WTC11 (cell line): ENCODE measurements at regions of chr5 and their contacts with region 1.

Region 1: GRCh38 chr5:172059661-172060100 is 53.2 kb upstream of the FBXW11 start:
- DNase-seq: no peak
- ATAC-seq: peak; percentile 68
- H3K4me3 Mint-ChIP-seq: no peak overlapping the region
- H3K27ac Mint-ChIP-seq: no peak overlapping the region
- H3K4me1 Mint-ChIP-seq: 0 out of 2 replicates have a peak, but pooled peaks cover 2% of the 10 kb centered on the region
- H3K27me3 Mint-ChIP-seq: no peaks in the 10 kb centered on the region
- CTCF ChIP-seq: peak; percentile 66

Region 2: DNA sequence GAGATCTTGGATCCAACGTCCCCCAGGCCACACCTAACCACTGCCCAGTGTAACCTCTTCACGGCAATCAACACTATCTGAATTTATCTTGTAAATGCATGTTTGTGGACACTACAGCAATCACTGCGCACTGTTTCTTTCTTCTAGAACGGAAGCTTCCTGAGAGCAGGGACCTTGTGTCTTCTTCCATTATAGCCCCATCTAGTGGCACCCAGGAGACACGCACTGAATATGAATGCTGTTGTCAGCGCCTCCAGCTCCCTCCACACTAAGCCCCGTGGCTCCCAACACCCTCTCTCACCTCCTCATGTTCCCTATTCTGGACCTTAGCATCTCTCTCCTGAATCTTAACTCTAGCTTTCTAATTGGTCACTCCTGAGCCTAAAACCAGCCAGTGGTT is 201.4 kb before region 1 on chr5:
- CTCF ChIA-PET with region 1: interaction called, 14 read pairs
- POLR2A ChIA-PET with region 1: no interaction called
- DNase-seq: peak; percentile 37
- ATAC-seq: peak; percentile 85
- H3K4me3 Mint-ChIP-seq: no peak overlapping the region
- H3K27ac Mint-ChIP-seq: peak overlapping the region; percentile 73
- H3K4me1 Mint-ChIP-seq: peaks cover 16% of the 10 kb centered on the region
- H3K27me3 Mint-ChIP-seq: no peaks in the 10 kb centered on the region
- CTCF ChIP-seq: peak; percentile 57

Region 3: DNA sequence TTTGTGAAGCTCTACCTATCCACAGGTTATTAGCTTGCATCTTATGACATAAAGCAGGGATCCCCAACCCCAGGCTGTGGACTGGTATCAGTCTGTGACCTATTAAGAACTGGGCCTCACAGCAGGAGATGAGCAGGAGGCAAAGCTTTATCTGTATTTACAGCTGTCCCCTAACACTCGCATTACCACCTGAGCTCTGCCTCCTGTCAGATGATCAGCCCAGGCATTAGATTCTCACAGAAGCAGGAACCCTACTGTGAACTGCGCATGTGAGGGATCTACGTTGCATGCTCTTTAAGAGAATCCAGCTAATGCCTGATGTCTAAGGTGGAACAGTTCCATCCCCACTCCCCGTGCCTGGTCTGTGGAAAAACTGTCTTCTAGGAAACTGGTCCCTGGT is 72.9 kb before region 1 on chr5:
- CTCF ChIA-PET with region 1: interaction called, 10 read pairs
- POLR2A ChIA-PET with region 1: no interaction called
- DNase-seq: no peak
- ATAC-seq: peak; percentile 50
- H3K4me3 Mint-ChIP-seq: no peak overlapping the region
- H3K27ac Mint-ChIP-seq: peak overlapping the region; percentile 80
- H3K4me1 Mint-ChIP-seq: peaks cover 60% of the 10 kb centered on the region
- H3K27me3 Mint-ChIP-seq: no peaks in the 10 kb centered on the region
- CTCF ChIP-seq: no peak

Region 4: DNA sequence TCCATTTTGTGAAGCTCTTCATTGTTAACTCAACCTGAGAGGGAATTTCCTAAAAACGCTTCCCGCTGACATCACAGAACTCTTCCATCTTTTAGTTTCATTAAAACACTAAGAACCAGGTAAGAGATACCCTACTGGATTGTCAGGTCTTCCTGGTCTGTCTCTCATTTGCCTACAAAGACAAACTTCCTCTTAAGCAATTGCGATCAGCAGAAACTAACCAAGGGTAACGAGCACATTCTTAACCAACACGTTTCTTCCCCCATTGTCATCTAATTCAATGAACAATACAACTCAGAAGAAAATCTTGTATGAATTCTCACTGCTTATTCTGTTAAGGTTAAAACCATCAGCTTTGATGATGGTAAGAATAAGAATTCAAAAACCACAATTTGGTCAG is 59.8 kb before region 1 on chr5:
- CTCF ChIA-PET with region 1: no interaction called
- POLR2A ChIA-PET with region 1: no interaction called
- DNase-seq: no peak
- ATAC-seq: no peak
- H3K4me3 Mint-ChIP-seq: peak overlapping the region; percentile 18
- H3K27ac Mint-ChIP-seq: peak overlapping the region; percentile 73
- H3K4me1 Mint-ChIP-seq: peaks cover 82% of the 10 kb centered on the region
- H3K27me3 Mint-ChIP-seq: no peaks in the 10 kb centered on the region
- CTCF ChIP-seq: no peak

Region 5: GRCh38 chr5:172035039-172035438 is 24.6 kb before region 1 on chr5:
- CTCF ChIA-PET with region 1: interaction called, 12 read pairs
- POLR2A ChIA-PET with region 1: no interaction called
- DNase-seq: no peak
- ATAC-seq: no peak
- H3K4me3 Mint-ChIP-seq: no peak overlapping the region
- H3K27ac Mint-ChIP-seq: no peak overlapping the region
- H3K4me1 Mint-ChIP-seq: no peaks in the 10 kb centered on the region; the same call in 1 of the 2 replicates
- H3K27me3 Mint-ChIP-seq: peaks cover 7% of the 10 kb centered on the region
- CTCF ChIP-seq: no peak

Region 6: DNA sequence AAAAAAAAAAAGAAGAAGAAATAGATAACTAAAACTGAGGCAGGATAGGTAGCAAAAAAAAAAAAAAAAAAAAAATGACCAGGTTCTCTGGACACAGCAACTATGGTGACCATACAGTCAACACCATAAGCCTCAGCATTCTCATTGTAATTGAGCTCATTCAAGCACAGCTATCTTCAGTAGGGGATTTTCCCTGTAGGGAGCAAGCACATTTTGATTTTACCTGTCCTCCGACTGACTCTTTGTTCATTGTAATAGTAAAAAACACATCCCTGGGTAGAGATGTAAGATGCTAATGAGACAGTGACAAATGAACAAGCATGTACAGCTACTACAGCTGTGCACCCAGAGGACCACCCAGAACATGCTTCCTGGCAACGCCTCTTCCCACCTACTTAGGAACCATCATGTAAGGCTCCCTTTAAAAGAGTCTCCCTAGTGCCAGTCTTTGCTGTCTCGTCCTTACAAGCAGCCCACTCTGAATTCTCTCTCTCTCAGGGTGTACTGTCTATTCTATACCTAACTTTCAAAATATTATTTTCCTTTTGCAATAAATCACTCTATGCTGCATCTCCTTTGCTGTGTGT is 11.7 kb after region 1 on chr5:
- CTCF ChIA-PET with region 1: interaction called, 38 read pairs
- POLR2A ChIA-PET with region 1: no interaction called
- DNase-seq: no peak
- ATAC-seq: peak; percentile 78
- H3K4me3 Mint-ChIP-seq: no peak overlapping the region
- H3K27ac Mint-ChIP-seq: 0 out of 2 replicates have a peak overlapping the region, but pooled peaks have one; percentile 26
- H3K4me1 Mint-ChIP-seq: peaks cover 6% of the 10 kb centered on the region
- H3K27me3 Mint-ChIP-seq: no peaks in the 10 kb centered on the region
- CTCF ChIP-seq: no peak

Region 7: DNA sequence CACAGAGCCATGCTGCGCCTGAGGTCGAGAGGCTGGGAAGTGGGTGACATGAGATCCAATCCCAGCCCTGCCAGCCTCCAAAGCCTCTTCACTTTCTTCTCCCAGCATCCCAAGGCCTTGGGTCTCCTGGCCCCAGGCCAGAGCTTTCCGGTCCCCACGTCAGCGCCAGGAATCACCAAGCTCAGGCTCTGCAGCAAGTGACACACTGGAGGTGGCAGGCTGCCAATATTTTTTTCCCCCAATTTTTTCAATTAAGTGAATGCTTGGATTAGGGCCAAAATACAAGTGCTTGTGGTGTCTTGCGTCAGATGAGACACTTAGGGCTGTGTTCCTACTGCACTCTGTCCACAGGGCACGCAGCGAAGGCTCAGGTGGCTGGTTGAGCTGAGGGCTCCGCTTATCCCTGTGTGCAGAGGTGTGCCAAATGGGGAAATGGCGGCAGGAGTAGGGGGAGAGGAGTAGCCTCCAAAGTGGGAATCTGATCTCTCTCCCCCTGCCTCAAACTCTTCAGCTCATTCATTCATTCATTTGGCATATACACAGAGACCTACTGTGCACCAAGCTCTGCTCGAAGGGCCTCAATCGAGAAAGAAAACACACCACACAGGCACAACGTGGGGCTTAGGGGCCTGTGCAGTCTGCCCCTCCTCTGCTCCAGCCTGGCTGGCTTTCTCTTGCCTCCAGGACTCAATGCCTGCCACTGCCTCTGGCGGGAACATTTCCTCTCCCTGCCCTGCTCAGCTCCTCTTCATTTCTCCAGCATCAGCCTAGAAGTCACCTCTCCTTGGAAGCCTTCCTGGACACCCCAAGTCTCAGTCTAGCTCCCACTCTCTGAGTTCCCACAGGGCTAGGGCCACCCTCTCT is 378.0 kb after region 1 on chr5:
- CTCF ChIA-PET with region 1: no interaction called
- POLR2A ChIA-PET with region 1: no interaction called
- DNase-seq: no peak
- ATAC-seq: no peak
- H3K4me3 Mint-ChIP-seq: no peak overlapping the region
- H3K27ac Mint-ChIP-seq: no peak overlapping the region; the same call in 1 of the 2 replicates
- H3K4me1 Mint-ChIP-seq: no peaks in the 10 kb centered on the region
- H3K27me3 Mint-ChIP-seq: no peaks in the 10 kb centered on the region
- CTCF ChIP-seq: no peak

Region 8: GRCh38 chr5:172594867-172595466 is 535.3 kb after region 1 on chr5:
- CTCF ChIA-PET with region 1: no interaction called
- POLR2A ChIA-PET with region 1: no interaction called
- DNase-seq: no peak
- ATAC-seq: no peak
- H3K4me3 Mint-ChIP-seq: no peak overlapping the region
- H3K27ac Mint-ChIP-seq: no peak overlapping the region
- H3K4me1 Mint-ChIP-seq: no peaks in the 10 kb centered on the region
- H3K27me3 Mint-ChIP-seq: peaks cover 3% of the 10 kb centered on the region; the same call in 1 of the 2 replicates
- CTCF ChIP-seq: no peak